H1 (cell line): ENCODE measurements at regions of chr18 and their contacts with region 1.

Region 1: DNA sequence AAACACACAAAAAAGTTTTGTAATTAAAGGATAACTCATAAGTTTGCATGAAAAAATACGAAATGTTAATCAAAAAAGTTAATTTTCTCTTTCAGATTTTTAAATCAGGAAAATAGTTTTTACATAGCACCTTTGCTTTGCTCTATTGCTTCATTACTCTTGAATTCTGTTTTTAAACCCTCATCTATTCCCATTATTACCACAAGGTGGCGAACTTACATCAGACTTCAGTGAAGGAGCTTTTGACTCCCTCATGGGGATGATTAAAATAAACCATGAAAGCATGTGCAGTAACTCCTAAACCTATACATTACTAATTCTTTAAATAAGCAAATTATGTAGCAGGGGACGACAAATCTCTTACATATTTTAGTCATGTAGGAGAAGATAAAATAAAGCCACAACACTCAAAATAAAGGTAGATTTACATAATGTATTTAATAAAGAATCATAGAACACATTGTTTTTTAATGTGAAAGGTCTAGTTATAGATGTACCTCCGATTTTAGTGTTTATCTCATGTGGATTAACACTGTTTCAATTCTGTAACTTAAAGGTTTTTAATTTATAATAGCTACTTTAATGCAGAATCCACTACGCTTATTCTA is 105.2 kb downstream of the NETO1 start:
- DNase-seq: no peak
- H3K4me3 ChIP-seq: no peak overlapping the region
- H3K27ac ChIP-seq: no peak overlapping the region
- H3K4me1 ChIP-seq: no peaks in the 10 kb centered on the region
- H3K27me3 ChIP-seq: no peaks in the 10 kb centered on the region
- CTCF ChIP-seq: peak in 2 of 3 experiments; percentile 60 to 68; a peak in 3 of 4 replicates
- EP300 ChIP-seq: no peak
- POLR2A ChIP-seq: no peak
- RAD21 ChIP-seq: peak; percentile 88

Region 2: GRCh38 chr18:72727038-72727655 is 35.5 kb before region 1 on chr18:
- CTCF ChIA-PET with region 1: no interaction called
- POLR2A ChIA-PET with region 1: no interaction called
- DNase-seq: no peak
- H3K4me3 ChIP-seq: no peak overlapping the region
- H3K27ac ChIP-seq: no peak overlapping the region
- H3K4me1 ChIP-seq: no peaks in the 10 kb centered on the region
- H3K27me3 ChIP-seq: no peaks in the 10 kb centered on the region
- CTCF ChIP-seq: no peak
- EP300 ChIP-seq: no peak
- POLR2A ChIP-seq: no peak
- RAD21 ChIP-seq: no peak

Region 3: DNA sequence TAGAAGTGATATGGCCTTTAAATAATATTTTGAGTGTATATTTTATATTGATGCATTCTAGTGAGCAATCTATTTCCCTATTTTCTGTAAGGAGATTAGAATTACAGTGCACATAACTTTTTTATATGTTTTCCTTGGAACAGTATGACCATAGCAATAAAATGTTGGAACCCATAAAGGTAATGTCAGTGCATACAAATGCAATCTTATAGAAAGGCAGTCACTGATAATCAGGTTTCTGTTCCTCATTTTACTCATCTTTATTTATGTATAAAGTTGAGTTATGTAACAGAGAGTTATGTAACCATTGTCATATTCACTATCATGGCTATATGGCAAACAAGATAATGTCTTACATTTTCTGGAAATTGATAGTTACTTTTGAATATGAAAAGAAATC is 285.1 kb after region 1 on chr18:
- CTCF ChIA-PET with region 1: no interaction called
- POLR2A ChIA-PET with region 1: no interaction called
- DNase-seq: no peak
- H3K4me3 ChIP-seq: no peak overlapping the region
- H3K27ac ChIP-seq: no peak overlapping the region
- H3K4me1 ChIP-seq: no peaks in the 10 kb centered on the region
- H3K27me3 ChIP-seq: no peaks in the 10 kb centered on the region
- CTCF ChIP-seq: no peak
- EP300 ChIP-seq: no peak
- POLR2A ChIP-seq: no peak
- RAD21 ChIP-seq: no peak

Region 4: DNA sequence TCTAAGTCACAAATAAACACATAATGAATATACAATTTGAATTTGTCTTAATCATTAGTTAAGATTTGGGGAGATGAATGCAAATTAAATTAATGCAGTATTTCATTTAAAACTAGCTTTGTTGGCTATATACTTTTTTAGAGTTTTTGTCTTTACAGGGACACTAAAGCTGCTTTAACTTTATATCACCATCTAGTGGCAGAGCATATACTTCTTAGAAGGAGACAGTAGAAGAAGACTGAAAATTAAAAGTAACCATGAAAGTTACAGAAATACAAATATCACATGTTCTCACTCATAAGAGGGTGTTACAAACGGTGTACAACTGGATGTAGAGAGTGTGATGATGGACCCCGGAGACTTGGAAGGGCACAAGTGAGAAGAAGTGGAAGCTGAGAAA is 373.5 kb after region 1 on chr18:
- CTCF ChIA-PET with region 1: interaction called, 13 read pairs
- POLR2A ChIA-PET with region 1: no interaction called
- DNase-seq: no peak
- H3K4me3 ChIP-seq: no peak overlapping the region
- H3K27ac ChIP-seq: no peak overlapping the region
- H3K4me1 ChIP-seq: no peaks in the 10 kb centered on the region
- H3K27me3 ChIP-seq: peaks cover 0 to 1% (median 0%) of the 10 kb centered on the region in 4 experiments; a peak in 1 of 7 replicates
- CTCF ChIP-seq: peak in 2 of 3 experiments; percentile 26 to 44; a peak in 2 of 4 replicates
- EP300 ChIP-seq: no peak
- POLR2A ChIP-seq: no peak
- RAD21 ChIP-seq: peak in 1 of 2 experiments; percentile 50; a peak in 3 of 4 replicates

Region 5: GRCh38 chr18:73520229-73520628 is 757.6 kb after region 1 on chr18:
- CTCF ChIA-PET with region 1: interaction called, 10 read pairs
- POLR2A ChIA-PET with region 1: no interaction called
- DNase-seq: peak; percentile 21 to 73
- H3K4me3 ChIP-seq: no peak overlapping the region
- H3K27ac ChIP-seq: no peak overlapping the region
- H3K4me1 ChIP-seq: no peaks in the 10 kb centered on the region
- H3K27me3 ChIP-seq: peaks cover 0 to 1% (median 0%) of the 10 kb centered on the region in 4 experiments; a peak in 1 of 7 replicates
- CTCF ChIP-seq: peak; percentile 84 to 87 (median 87)
- EP300 ChIP-seq: no peak
- POLR2A ChIP-seq: no peak
- RAD21 ChIP-seq: peak; percentile 90 to 93